Right cardiac atrium (tissue), 5 donors: ENCODE measurements at regions of chr11 and their contacts with region 1.

Region 1: DNA sequence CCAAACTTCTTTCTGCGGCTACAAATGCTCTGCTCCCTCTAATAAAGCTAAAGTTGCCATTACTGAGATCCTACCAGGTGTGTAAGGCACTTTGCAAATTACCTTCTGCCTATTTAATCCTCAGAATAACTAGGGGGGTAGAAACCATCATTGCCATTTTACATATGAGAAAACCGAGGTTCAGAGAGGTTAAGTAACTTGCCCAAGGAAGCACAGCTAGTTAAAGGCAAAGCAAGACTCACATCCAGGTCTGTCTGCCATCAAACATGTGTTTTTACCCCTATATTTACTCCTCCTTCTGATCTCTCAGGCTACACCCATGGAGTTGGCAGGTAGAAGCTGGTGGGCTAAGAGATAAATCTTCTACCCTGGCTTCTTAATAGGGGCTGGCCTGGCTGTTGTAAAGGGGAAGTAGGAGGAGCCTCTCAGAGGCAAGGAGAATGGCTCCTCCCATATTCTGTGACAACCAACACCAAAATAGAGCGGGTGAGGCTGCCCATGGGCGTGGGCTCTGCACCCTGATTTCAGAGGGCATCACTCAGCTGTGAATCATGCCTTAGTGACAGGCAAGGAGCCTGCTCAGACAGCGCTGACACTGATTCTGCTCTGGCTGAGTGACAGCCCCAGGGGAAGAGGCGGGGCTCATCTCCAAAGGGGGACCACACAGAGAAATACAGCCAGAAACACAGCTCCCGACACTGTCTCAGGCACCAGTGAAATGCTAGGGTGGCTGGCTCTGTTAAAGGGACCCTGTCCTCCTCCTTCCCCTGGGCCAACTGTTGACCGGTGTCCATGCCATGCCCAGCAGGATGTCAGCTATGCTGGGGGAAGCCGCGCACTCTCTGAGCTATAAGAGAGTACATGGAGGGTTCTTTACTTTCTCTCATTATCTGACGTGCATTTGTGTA is 106.8 kb downstream of the ABTB2 start:
- DNase-seq: peak; percentile 69 to 88 (median 85)
- ATAC-seq: peak; percentile 92 to 95
- H3K4me3 ChIP-seq: peak overlapping the region; percentile 21
- H3K27ac ChIP-seq: peak overlapping the region; percentile 62
- H3K4me1 ChIP-seq: peaks cover 14% of the 10 kb centered on the region
- H3K27me3 ChIP-seq: no peaks in the 10 kb centered on the region

Region 2: DNA sequence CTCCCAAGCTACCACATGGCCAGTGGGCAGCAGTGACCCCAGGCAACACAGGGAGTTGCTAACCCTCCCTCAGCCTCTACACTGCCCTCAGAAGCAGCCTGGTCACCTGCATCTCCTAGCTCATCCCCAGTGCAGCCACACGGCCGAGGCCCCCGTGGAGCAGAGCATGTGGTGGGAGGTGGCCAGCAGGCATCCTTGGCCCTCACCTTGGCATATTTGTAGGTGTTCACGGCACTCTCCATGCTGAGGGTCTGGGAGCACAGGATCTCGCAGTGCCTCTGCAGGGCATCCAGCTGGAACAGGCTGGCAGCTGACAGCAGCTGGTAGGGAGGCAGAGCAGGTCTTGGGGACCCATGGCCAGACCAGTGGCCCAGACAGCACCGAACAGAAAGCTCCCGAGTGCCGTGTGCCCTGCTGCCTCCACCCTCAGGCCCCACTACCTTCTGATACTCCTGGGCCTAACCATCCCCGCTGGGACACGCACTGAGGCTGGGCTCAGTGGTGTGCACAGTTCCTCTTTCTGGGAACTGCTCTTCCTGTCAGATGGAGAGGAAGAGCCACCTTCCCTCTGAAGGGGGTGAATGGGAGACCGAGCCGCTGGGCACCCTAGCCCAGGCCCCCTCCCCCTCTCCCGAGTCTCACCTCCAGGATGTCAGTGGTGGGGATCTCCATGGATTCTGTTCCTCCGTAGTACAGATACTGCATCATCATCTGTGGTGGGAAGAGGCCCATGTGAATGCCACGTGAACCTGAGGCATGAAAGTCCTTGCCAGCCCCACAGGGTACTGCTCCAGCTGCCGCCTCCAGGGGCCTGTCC is 96.7 kb before region 1 on chr11:
- intact Hi-C with region 1: no loop called
- DNase-seq: peak in 1 of 3 donors; percentile 57
- ATAC-seq: no peak
- H3K4me3 ChIP-seq: no peak overlapping the region
- H3K27ac ChIP-seq: no peak overlapping the region
- H3K4me1 ChIP-seq: no peaks in the 10 kb centered on the region
- H3K27me3 ChIP-seq: no peaks in the 10 kb centered on the region

Region 3: DNA sequence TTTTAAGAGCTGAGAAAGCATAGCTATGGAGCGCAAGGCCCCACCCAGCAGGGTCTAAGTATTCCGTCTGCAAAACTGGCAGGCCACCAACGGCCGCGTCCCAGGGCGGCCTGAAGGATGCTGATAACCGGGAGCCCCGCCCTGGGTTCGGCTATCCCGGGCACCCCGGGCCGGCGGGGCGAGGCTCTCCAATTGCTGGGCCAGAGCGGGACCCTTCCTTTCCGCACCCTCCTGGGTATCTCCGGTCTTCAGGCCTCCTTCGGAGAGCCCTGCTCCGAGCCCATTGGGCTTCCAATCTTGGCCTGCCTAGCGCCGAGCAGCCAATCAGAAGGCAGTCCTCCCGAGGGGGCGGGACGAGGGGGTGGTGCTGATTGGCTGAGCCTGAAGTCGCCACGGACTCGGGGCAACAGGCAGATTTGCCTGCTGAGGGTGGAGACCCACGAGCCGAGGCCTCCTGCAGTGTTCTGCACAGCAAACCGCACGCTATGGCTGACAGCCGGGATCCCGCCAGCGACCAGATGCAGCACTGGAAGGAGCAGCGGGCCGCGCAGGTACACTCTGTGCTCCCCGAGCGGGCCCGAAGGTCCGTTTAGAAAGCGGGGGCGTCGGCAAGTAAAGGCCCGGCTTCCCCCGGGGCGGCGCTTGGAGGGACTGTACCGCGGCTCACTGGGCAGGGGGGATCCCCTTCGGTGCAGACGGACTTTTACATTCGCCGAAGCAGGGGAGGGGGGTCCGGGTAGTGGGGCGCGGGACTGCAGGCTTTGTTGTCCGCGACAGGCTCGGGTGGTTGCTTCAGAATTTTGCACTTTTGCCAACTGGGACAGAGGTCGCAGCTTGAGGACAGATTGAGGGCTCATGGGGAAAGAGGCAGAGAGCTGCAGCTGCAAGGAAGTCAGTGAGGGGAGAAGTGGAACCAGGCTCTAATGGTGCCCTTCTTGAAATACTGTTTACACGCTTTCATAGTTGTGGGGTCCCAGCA is 187.8 kb after region 1 on chr11 and contains the start of gene CAT:
- intact Hi-C with region 1: loop called in 1 of 4 experiments (anchors 5 kb)
- DNase-seq: peak; percentile 99
- ATAC-seq: peak; percentile 99
- H3K4me3 ChIP-seq: peak within 1 kb of the TSS; percentile 69
- H3K27ac ChIP-seq: peak within 1 kb of the TSS; percentile 88
- H3K4me1 ChIP-seq: peaks cover 12% of the 10 kb centered on the region
- H3K27me3 ChIP-seq: no peaks in the 10 kb centered on the region
- total RNA-seq, gene CAT: 81.6 to 114 (median 102) TPM

Region 4: GRCh38 chr11:35073691-35074419 is 822.9 kb after region 1 on chr11:
- intact Hi-C with region 1: no loop called
- DNase-seq: no peak
- ATAC-seq: no peak
- H3K4me3 ChIP-seq: no peak overlapping the region
- H3K27ac ChIP-seq: no peak overlapping the region
- H3K4me1 ChIP-seq: no peaks in the 10 kb centered on the region
- H3K27me3 ChIP-seq: no peaks in the 10 kb centered on the region